Calu3 (cell line): ENCODE measurements at regions of chr19 and their contacts with region 1.

Region 1: DNA sequence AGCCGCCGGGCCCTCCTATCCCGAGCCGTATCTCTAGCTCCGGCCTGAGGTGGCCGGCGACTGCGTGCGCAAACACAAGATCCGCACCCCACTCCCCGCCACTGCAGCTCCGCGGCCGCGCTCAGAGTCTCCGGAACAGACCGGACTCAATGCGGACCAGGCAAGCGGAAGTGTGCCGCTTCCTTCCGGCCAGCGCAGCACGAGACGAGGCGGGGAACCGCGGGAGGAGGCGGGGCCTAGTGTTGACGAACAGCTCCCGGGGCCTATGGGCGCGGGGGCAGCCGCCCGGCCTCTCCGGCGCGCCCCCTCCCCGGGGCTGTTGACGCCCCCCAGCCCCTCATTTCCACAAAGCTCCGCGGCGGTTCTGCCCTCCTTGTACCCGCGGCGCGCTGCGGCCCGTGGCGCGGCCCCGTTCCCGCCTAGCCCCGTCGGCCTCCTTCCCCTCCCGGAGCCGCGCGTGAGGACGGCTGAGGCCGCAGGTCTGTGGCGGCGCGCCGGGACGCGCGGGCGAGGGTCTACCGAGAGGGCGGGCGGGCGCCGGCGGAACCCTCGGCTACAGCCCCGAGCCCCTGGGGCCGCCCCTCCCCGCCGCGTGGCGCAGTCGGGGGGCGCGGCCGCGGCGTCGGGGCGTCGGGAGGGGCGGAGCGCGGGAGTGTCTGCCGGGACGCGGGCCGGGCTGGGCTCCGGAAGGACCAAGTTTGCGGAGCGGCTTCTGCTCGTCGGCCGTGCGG is at the start of gene DPY19L3:
- DNase-seq: peak; percentile 98
- H3K4me3 Mint-ChIP-seq: peak within 1 kb of the TSS; percentile 92
- H3K27ac Mint-ChIP-seq: peak within 1 kb of the TSS; percentile 83
- H3K4me1 Mint-ChIP-seq: peaks cover 13% of the 10 kb centered on the region
- H3K27me3 Mint-ChIP-seq: no peaks in the 10 kb centered on the region
- CTCF ChIP-seq: no peak
- total RNA-seq, gene DPY19L3: 23.8 and 29.4 TPM in 2 replicates

Region 2: DNA sequence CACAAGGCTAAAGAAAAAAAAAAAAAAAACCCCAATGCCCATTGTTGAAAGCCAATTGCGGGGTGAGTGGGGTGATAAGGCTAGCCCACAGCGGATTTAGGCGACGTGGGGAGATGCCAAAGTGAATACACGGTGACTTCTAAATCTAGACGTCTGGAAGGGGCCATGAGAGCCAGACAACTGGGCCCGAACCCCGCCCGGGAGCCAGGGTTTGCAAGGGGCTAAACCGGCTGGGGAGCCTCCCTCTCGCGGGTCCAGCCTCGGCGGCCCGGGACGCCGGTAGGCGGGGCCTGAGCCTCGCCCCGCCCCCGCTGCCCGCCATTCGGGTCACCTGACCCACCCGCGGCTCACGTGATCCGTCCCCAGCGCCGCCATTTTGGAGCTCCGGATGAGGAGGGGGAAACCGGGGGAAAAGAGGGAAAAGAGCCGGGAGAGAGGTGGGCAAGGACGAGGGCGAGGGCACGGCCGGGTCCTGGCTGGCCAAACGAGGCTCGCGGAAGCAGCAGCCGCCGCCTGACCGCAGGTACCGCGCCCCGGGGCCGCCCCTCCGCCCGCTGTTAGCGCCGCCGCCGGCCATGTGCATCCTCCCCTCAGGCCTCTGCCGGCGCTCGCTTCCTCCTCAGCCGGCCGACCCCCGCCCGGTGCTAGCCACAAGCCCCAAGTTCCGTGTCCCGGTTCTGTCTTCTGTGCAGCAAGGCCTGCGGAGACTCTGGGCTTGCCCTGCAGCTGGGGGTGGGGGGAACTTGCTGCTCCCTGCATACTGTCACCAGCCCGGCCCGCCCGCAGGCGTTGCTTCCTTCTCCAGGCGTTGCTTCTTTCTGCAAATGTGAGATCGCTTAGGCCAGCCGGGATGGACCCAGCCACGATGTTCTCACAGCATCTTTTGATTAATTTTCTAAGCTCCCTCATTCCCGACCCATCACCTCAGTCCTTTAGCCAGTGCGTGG is 60.1 kb before region 1 on chr19 and contains the start of gene ZNF507:
- CTCF ChIA-PET with region 1: no interaction called
- intact Hi-C with region 1: loop called (anchors 5 kb)
- DNase-seq: peak; percentile 93
- H3K4me3 Mint-ChIP-seq: peak within 1 kb of the TSS; percentile 100
- H3K27ac Mint-ChIP-seq: peak within 1 kb of the TSS; percentile 99
- H3K4me1 Mint-ChIP-seq: peaks cover 19% of the 10 kb centered on the region
- H3K27me3 Mint-ChIP-seq: peaks cover 12% of the 10 kb centered on the region
- CTCF ChIP-seq: no peak
- total RNA-seq, gene ZNF507: 31.5 and 34.0 TPM in 2 replicates

Region 3: GRCh38 chr19:32773126-32773525 is 367.5 kb after region 1 on chr19:
- CTCF ChIA-PET with region 1: no interaction called
- intact Hi-C with region 1: no loop called
- DNase-seq: no peak
- H3K4me3 Mint-ChIP-seq: no peak overlapping the region
- H3K27ac Mint-ChIP-seq: no peak overlapping the region
- H3K4me1 Mint-ChIP-seq: no peaks in the 10 kb centered on the region
- H3K27me3 Mint-ChIP-seq: peaks cover 22% of the 10 kb centered on the region
- CTCF ChIP-seq: no peak